ENCODE measurements at regions of chr1 and their contacts with region 1.

Region 1: DNA sequence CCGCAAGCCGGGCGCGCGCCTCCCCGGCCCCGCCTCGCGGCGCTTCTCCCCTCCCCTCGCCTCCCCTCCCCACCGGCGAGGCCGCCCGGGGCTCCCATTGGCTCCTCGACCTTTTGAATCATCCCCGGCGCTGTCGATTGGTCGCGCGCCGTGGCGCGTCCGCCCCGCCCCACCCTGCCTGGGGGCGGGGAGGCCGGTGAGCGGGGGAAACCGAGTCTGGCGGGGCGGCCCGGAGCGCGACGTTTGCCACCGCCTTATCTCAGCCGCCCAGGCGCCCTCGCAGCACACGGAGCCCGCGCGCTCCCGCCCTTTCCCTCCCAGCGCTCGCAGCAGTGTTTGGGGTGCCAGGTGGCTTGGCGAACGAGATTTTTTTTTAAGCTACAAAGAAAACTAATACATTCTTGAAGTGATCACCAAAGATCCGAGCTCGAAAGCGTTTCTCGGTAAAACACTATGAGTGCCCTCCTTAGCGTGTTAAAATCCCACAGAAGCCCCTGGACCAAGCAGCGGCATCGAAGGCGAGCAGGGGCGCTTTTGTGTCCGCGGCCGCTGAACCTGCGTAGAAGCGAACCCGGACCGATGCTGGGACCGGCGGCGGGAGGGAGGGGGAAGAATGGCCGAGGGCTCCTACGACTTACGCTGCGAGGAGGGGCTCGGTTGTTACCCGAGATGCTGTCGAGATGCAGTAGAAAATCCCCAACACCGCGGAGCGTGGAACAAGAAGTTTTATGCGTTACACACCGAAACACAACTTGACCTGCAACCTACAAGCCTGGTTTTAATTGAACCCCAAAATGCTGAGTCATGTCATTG is 436 bp upstream of the LBR start:
- DNase-seq: peak; percentile 83 to 96 (median 90)
- ATAC-seq: peak; percentile 89
- H3K4me3 ChIP-seq: peak overlapping the region; percentile 94
- H3K4me3 Mint-ChIP-seq: peak overlapping the region; percentile 90
- H3K27ac ChIP-seq: peak overlapping the region; percentile 84 to 85
- H3K27ac Mint-ChIP-seq: peak overlapping the region; percentile 84
- H3K4me1 ChIP-seq: peaks cover 33% of the 10 kb centered on the region
- H3K4me1 Mint-ChIP-seq: peaks cover 47% of the 10 kb centered on the region
- H3K27me3 ChIP-seq: no peaks in the 10 kb centered on the region
- H3K27me3 Mint-ChIP-seq: no peaks in the 10 kb centered on the region
- CTCF ChIP-seq: no peak

Region 2: DNA sequence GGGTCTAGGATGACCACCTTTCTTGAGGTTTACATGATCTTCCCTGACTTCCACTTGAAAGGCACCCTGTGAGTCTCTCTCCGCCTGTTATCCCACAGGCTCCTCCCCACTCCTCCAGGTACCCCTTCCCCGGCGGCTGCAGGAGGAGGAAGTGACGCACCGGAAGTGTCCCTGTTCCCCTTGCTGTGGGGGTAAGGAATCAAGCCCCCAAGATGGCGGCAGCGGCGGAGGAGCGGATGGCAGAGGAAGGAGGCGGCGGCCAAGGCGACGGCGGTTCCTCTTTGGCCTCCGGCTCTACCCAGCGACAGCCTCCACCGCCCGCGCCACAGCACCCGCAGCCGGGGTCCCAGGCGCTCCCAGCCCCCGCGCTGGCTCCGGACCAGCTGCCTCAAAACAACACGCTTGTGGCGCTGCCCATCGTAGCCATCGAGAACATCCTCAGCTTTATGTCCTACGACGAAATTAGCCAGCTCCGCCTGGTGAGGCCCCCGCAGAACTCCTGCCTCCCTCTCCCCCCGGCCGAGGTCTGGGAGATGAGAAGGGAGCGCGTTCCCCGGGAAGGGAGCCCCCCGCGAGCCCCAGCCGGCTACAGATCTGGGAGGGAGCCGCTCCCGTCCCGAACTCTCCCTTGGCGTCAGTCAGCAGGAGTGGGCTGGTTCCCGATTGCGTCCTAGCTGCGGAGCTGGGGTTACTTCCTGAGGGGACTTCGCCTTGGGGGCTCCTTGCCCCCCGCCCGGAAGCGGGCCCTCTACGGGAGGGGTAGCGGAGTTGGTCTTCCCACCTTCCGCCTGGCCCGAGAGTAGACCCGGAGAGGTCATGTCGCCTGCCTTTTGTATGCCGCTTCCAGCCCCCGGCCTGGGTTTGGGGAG is 1314.1 kb before region 1 on chr1 and contains the start of gene FBXO28:
- CTCF ChIA-PET with region 1: no interaction called
- POLR2A ChIA-PET with region 1: no interaction called
- intact Hi-C with region 1: loop called in 1 of 2 experiments (anchors 5 kb)
- DNase-seq: peak; percentile 85 to 96 (median 92)
- ATAC-seq: peak; percentile 91
- H3K4me3 ChIP-seq: peak within 1 kb of the TSS; percentile 98
- H3K4me3 Mint-ChIP-seq: peak within 1 kb of the TSS; percentile 92
- H3K27ac ChIP-seq: peak within 1 kb of the TSS; percentile 91 to 98
- H3K27ac Mint-ChIP-seq: peak within 1 kb of the TSS; percentile 84
- H3K4me1 ChIP-seq: peaks cover 17% of the 10 kb centered on the region
- H3K4me1 Mint-ChIP-seq: peaks cover 42% of the 10 kb centered on the region
- H3K27me3 ChIP-seq: no peaks in the 10 kb centered on the region
- H3K27me3 Mint-ChIP-seq: peaks cover 6% of the 10 kb centered on the region
- CTCF ChIP-seq: no peak
- total RNA-seq, gene FBXO28: 32.5 to 37.1 TPM

Region 3: DNA sequence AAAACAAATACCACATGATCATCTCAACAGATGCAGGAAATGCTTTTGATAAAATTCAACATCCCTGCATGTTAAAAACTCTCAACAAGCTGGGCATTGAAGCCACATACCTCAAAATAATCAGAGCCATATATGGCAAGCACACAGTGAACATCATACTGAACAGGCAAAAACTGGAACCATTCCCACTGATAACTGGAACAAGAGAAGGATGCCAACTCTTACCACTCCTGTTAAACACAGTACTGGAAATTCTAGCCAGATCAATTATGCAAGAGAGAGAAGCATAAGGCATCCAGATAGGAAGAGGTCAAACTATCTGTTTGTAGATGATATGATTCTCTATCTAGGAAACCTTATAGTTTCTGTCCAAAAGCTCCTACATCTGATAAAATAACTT is 407.2 kb before region 1 on chr1:
- CTCF ChIA-PET with region 1: no interaction called
- POLR2A ChIA-PET with region 1: no interaction called
- intact Hi-C with region 1: no loop called
- DNase-seq: no peak
- ATAC-seq: no peak
- H3K4me3 ChIP-seq: no peak overlapping the region
- H3K4me3 Mint-ChIP-seq: no peak overlapping the region
- H3K27ac ChIP-seq: no peak overlapping the region
- H3K27ac Mint-ChIP-seq: no peak overlapping the region
- H3K4me1 ChIP-seq: no peaks in the 10 kb centered on the region
- H3K4me1 Mint-ChIP-seq: no peaks in the 10 kb centered on the region
- H3K27me3 ChIP-seq: no peaks in the 10 kb centered on the region
- H3K27me3 Mint-ChIP-seq: peaks cover 12% of the 10 kb centered on the region
- CTCF ChIP-seq: no peak

Region 4: DNA sequence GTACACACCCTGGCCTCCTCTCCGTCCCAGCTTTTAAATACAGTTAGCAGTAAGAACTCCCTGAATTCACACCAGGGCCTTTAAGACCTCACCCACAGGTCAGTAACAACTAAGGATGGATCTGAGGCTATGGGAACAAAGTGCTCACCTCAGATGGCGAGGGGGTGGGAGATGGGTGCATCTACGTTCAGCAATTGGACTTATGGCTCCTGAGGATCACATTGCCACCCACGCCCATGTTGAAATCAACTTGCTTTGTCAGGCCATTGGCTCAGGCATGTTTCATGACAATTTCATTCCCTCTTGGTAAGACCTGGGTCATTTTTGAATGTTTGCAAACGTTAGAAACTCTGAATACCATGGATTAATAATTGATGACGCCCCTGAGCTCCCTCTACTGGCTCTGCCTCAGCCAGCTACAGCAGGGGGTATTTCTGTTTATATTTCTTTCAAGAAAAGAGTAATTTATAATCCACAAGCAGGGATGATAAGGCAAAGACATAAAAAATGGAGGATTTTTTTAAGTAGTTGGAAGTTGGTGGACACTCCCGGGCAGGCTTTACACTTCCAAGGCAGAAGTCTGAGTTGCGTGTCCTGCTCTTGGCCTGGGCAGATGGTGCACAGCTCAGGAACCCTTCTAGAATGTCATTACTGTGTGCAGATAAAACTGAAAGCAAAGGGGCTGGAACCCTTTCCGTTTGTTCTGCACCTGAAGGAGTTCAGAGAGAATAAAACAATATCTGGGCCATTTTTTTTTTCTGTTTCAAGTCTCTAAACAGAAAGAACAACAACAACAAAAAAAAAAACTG is 13.2 kb after region 1 on chr1:
- CTCF ChIA-PET with region 1: interaction called, 7 read pairs
- POLR2A ChIA-PET with region 1: interaction called, 280 read pairs
- intact Hi-C with region 1: loop called (anchors 1 kb)
- DNase-seq: peak in 2 of 14 experiments; percentile 21 to 26
- ATAC-seq: no peak
- H3K4me3 ChIP-seq: no peak overlapping the region
- H3K4me3 Mint-ChIP-seq: peak overlapping the region; percentile 66
- H3K27ac ChIP-seq: peak overlapping the region in 1 of 2 donors; percentile 4
- H3K27ac Mint-ChIP-seq: peak overlapping the region; percentile 61
- H3K4me1 ChIP-seq: peaks cover 54% of the 10 kb centered on the region
- H3K4me1 Mint-ChIP-seq: peaks cover 53% of the 10 kb centered on the region
- H3K27me3 ChIP-seq: no peaks in the 10 kb centered on the region
- H3K27me3 Mint-ChIP-seq: no peaks in the 10 kb centered on the region
- CTCF ChIP-seq: peak; percentile 27

Region 5: GRCh38 chr1:225460737-225461562 is 32.7 kb after region 1 on chr1:
- CTCF ChIA-PET with region 1: no interaction called
- POLR2A ChIA-PET with region 1: interaction called, 10 read pairs
- intact Hi-C with region 1: loop called in 1 of 2 experiments (anchors 2 kb)
- DNase-seq: peak in 9 of 14 experiments; percentile 21 to 87 (median 46)
- ATAC-seq: peak; percentile 74
- H3K4me3 ChIP-seq: no peak overlapping the region
- H3K4me3 Mint-ChIP-seq: no peak overlapping the region
- H3K27ac ChIP-seq: no peak overlapping the region
- H3K27ac Mint-ChIP-seq: peak overlapping the region; percentile 31
- H3K4me1 ChIP-seq: peaks cover 43% of the 10 kb centered on the region
- H3K4me1 Mint-ChIP-seq: peaks cover 30% of the 10 kb centered on the region
- H3K27me3 ChIP-seq: no peaks in the 10 kb centered on the region
- H3K27me3 Mint-ChIP-seq: no peaks in the 10 kb centered on the region
- CTCF ChIP-seq: no peak

Region 6: GRCh38 chr1:225474986-225475820 is 46.9 kb after region 1 on chr1:
- CTCF ChIA-PET with region 1: interaction called, 3 read pairs
- POLR2A ChIA-PET with region 1: interaction called, 3 read pairs
- intact Hi-C with region 1: loop called in 1 of 2 experiments (anchors 2 kb)
- DNase-seq: peak; percentile 27 to 88 (median 60)
- ATAC-seq: peak; percentile 85
- H3K4me3 ChIP-seq: no peak overlapping the region
- H3K4me3 Mint-ChIP-seq: no peak overlapping the region
- H3K27ac ChIP-seq: no peak overlapping the region
- H3K27ac Mint-ChIP-seq: peak overlapping the region; percentile 39
- H3K4me1 ChIP-seq: peaks cover 55% of the 10 kb centered on the region
- H3K4me1 Mint-ChIP-seq: peaks cover 42% of the 10 kb centered on the region
- H3K27me3 ChIP-seq: no peaks in the 10 kb centered on the region
- H3K27me3 Mint-ChIP-seq: no peaks in the 10 kb centered on the region
- CTCF ChIP-seq: peak; percentile 100

Measured in CD4-positive, alpha-beta T cell (primary cell).